ENCODE measurements at regions of chr16 and their contacts with region 1.

Region 1: GRCh38 chr16:67816240-67817031 is 9.7 kb downstream of the TSNAXIP1 start:
- DNase-seq: peak; percentile 92
- CTCF ChIP-seq: peak; percentile 100

Region 2: DNA sequence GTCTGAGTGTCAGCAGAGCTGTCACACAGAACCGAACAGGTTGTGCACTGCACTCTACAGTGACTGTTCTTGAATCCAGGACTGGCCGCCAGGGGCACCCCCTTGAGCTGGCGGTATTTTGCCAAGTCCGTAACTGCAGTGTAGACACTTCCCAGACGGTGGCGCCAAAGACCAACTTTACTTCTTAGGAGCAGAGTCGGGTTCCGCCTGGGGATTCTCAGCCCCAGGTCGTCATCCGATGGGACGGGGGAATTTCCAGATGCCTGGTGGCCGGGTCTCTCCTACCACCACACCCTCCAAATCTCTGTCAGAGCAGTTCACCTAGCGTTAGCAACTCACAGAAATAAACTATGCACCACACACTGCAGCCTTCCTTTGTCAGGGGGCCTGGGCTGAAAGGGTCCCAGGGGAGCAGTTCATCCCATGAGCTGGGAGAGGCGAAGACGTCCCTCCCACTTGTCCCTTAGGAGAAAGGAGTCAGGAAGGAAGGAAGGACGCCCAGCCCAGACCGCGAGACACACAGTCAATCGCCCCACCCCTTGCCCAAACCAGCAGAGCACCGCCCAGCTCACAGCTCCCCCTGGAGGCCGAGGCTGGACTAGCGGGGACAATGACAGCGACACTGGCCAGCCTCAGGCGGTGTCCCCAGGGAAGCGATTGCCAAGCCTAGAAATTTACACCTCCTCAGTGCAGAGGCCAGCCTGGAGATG is 295.2 kb before region 1 on chr16:
- CTCF ChIA-PET with region 1: interaction called, 12 read pairs
- POLR2A ChIA-PET with region 1: no interaction called
- DNase-seq: peak; percentile 91
- CTCF ChIP-seq: peak; percentile 99

Region 3: GRCh38 chr16:67760206-67760955 is 56.1 kb before region 1 on chr16:
- CTCF ChIA-PET with region 1: interaction called, 10 read pairs
- POLR2A ChIA-PET with region 1: no interaction called
- DNase-seq: no peak
- CTCF ChIP-seq: no peak

Region 4: GRCh38 chr16:67833418-67834241 is 17.2 kb after region 1 on chr16:
- CTCF ChIA-PET with region 1: interaction called, 159 read pairs
- POLR2A ChIA-PET with region 1: interaction called, 6 read pairs
- DNase-seq: peak; percentile 98
- CTCF ChIP-seq: no peak

Region 5: DNA sequence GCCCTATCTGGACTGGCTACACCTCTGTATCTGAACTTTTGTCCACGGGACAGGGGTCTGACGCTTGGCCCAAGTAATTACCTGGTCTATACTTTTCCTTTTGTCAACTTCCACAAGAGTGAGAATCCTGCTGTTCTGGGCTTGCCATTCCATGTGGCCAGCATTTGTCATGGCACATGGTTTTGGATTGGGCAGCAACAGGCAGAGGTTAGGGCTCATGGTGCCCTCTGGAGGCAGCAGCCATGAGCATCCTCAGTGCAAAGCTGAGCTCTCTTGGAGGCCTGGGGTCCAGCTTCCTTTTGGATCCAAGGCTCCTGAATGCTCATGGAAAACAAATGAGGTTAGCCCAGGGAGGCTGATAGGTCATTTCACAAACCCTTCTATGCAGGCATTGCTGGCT is 48.9 kb after region 1 on chr16:
- CTCF ChIA-PET with region 1: interaction called, 53 read pairs
- POLR2A ChIA-PET with region 1: no interaction called
- DNase-seq: no peak
- CTCF ChIP-seq: peak; percentile 42

Region 6: DNA sequence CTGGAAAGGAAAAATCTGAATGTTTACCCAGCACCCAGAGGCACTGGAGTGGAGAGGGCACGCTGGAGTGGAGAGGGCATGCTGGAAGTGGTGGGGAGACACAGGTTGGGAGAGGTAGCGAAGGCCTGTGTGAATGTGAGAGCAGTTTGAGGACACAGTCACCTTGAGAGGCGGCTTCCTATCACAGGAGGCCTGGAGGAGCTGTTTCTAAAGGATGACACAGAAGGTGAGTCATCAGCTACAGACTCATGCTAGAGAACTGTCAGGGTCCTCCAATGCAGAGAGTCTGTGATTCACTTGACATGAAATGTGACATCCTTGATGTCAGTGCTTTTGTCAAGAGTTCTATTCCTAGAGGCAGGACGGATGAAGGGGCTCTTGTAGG is 101.4 kb after region 1 on chr16:
- CTCF ChIA-PET with region 1: interaction called, 14 read pairs
- POLR2A ChIA-PET with region 1: no interaction called
- DNase-seq: no peak
- CTCF ChIP-seq: no peak

Region 7: DNA sequence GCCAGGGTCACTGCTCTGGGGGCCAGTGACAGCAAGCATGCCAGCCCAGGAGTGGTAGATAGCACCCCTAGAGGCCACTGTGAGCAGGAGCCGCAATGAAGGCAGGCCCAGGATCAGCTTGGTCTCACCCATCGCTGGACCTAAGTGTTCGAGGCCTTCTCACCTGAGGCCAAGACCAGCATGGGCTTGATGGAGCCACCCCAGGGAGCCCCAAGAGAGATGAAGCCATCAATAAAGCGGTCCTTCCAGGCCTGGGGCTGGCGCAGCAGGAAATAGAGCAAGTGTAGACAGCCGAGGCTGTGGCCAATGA is 125.7 kb after region 1 on chr16:
- CTCF ChIA-PET with region 1: interaction called, 18 read pairs
- POLR2A ChIA-PET with region 1: no interaction called
- DNase-seq: peak; percentile 75
- CTCF ChIP-seq: peak; percentile 68

Region 8: DNA sequence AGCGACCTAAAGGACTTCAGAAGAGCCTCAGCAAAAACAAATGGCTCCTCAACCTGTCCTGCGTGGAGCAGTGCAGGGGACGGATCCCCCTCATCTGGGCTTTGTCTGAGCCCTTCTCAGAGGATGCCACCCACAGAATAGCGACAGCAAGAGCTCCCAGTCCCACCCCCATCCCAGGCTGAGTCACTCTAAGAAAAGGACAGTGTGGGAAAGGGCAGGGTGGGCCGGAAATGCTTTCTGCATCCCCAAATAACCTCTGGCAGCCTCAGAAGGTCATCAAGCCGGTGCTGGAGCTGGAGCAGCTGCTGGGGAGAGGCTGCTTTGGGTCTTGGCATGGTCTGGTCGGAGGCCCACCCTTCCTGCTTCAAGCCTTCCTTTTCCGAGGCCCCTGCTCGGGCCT is 143.1 kb after region 1 on chr16:
- CTCF ChIA-PET with region 1: no interaction called
- POLR2A ChIA-PET with region 1: no interaction called
- DNase-seq: no peak
- CTCF ChIP-seq: no peak